A549 (cell line): ENCODE measurements at regions of chr16 and their contacts with region 1.

Region 1: DNA sequence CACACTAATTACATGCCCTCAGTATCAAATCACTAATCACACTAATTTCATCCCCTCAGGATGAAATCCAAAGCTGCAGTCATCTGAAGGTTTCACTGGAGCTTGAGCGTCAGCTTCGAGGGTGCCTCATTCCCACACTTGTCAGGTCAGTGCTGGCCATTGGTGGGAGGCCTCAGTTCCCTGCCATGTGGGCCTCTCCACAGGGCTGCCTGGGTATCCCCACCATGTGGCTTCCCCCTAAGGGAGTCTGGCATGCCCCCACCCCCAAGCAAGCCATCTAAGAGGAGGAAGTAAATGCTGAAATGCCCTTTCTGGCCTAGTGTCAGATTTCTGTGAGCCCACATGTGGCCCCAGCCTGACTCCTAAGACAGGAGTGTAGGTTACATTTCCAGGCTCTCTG is 78.6 kb upstream of the CDH5 start:
- DNase-seq: no peak
- ATAC-seq: no peak
- H3K4me3 ChIP-seq: no peak overlapping the region
- H3K27ac ChIP-seq: no peak overlapping the region
- H3K4me1 ChIP-seq: no peaks in the 10 kb centered on the region
- CTCF ChIP-seq: no peak
- EP300 ChIP-seq: no peak
- POLR2A ChIP-seq: no peak
- RAD21 ChIP-seq: no peak

Region 2: GRCh38 chr16:66275775-66276428 is 12.0 kb before region 1 on chr16:
- CTCF ChIA-PET with region 1: interaction called, 10 read pairs
- POLR2A ChIA-PET with region 1: no interaction called
- DNase-seq: peak; percentile 65 to 71
- ATAC-seq: peak; percentile 47 to 81; a peak in 4 of 6 replicates
- H3K4me3 ChIP-seq: no peak overlapping the region
- H3K27ac ChIP-seq: no peak overlapping the region
- H3K4me1 ChIP-seq: no peaks in the 10 kb centered on the region
- CTCF ChIP-seq: peak; percentile 46
- EP300 ChIP-seq: no peak
- POLR2A ChIP-seq: no peak
- RAD21 ChIP-seq: peak; percentile 35 to 65; a peak in 4 of 5 replicates